ENCODE measurements at regions of chr6 and their contacts with region 1.

Region 1: GRCh38 chr6:138765896-138766655 is 7.5 kb upstream of the CCDC28A start:
- DNase-seq: no peak
- H3K4me3 ChIP-seq: no peak overlapping the region
- H3K27ac ChIP-seq: no peak overlapping the region
- H3K4me1 ChIP-seq: no peaks in the 10 kb centered on the region
- H3K27me3 ChIP-seq: no peaks in the 10 kb centered on the region
- CTCF ChIP-seq: peak; percentile 67

Region 2: DNA sequence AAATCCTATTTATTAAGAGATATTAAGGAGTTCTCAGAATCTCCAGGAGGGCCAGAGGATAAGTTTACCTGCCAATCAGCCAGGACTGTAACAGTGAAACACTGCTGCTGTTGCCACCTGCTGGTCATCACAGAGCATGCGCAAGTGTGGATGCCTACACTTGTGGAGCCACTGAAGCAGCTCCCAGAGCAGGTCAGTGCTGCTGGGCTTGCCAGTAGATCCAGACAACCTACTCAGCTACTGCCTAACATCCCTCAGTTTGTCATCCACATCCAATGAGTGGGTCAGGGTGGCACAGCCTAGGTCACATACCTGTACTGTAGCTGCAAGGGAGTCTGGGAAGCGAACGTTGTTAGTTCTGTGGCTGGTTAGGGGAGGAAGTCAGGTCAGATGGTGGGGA is 248.4 kb before region 1 on chr6:
- intact Hi-C with region 1: loop called (anchors 10 kb)
- DNase-seq: peak; percentile 73
- H3K4me3 ChIP-seq: no peak overlapping the region
- H3K27ac ChIP-seq: no peak overlapping the region
- H3K4me1 ChIP-seq: no peaks in the 10 kb centered on the region
- H3K27me3 ChIP-seq: no peaks in the 10 kb centered on the region
- CTCF ChIP-seq: peak; percentile 65

Region 3: GRCh38 chr6:138588805-138589434 is 177.2 kb before region 1 on chr6:
- intact Hi-C with region 1: loop called (anchors 2 kb)
- DNase-seq: peak; percentile 70
- H3K4me3 ChIP-seq: no peak overlapping the region
- H3K27ac ChIP-seq: no peak overlapping the region
- H3K4me1 ChIP-seq: peaks cover 5% of the 10 kb centered on the region
- H3K27me3 ChIP-seq: no peaks in the 10 kb centered on the region
- CTCF ChIP-seq: peak; percentile 93

Region 4: GRCh38 chr6:138692058-138692977 is 73.8 kb before region 1 on chr6:
- intact Hi-C with region 1: loop called (anchors 5 kb)
- DNase-seq: peak; percentile 74
- H3K4me3 ChIP-seq: peak overlapping the region; percentile 61
- H3K27ac ChIP-seq: peak overlapping the region; percentile 79
- H3K4me1 ChIP-seq: no peaks in the 10 kb centered on the region
- H3K27me3 ChIP-seq: no peaks in the 10 kb centered on the region
- CTCF ChIP-seq: peak; percentile 85

Measured in colonic mucosa (tissue), 4 donors.